WTC11 (cell line): ENCODE measurements at regions of chr12 and their contacts with region 1.

Region 1: DNA sequence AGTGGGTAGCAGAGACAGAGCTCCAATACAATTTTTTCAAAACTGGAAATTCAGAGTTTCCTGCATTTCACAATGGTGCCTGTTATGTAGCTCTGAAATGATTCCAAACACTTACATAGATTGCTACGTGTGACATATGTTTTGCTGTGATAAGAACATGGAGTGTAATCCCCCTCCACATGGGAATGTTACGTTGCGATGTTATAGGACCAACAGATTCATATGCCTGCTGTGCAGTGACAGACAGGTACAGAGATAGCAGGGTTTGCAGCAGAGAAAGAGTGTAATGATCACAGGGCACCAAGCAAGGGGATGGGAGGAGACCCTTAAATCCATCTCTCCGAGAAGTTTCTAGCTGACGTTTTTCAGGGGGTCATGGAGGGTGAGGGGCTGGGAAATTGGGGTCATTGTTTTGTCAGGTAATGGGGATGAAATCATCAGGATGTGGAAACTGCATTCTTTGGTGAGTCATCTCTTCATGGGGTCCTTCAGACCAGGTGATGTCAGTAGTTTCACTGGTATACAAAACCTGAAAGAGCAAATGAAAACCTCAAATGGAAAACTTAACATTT is 76.6 kb upstream of the OSBPL8 start:
- DNase-seq: no peak
- ATAC-seq: peak; percentile 62
- H3K4me3 Mint-ChIP-seq: no peak overlapping the region
- H3K27ac Mint-ChIP-seq: no peak overlapping the region
- H3K4me1 Mint-ChIP-seq: peaks cover 38% of the 10 kb centered on the region
- H3K27me3 Mint-ChIP-seq: no peaks in the 10 kb centered on the region
- CTCF ChIP-seq: no peak

Region 2: GRCh38 chr12:76586764-76587395 is 49.3 kb before region 1 on chr12:
- CTCF ChIA-PET with region 1: no interaction called
- POLR2A ChIA-PET with region 1: no interaction called
- DNase-seq: no peak
- ATAC-seq: no peak
- H3K4me3 Mint-ChIP-seq: no peak overlapping the region
- H3K27ac Mint-ChIP-seq: no peak overlapping the region
- H3K4me1 Mint-ChIP-seq: no peaks in the 10 kb centered on the region
- H3K27me3 Mint-ChIP-seq: no peaks in the 10 kb centered on the region
- CTCF ChIP-seq: peak; percentile 36; the same call in 1 of the 2 replicates

Region 3: GRCh38 chr12:76621582-76622024 is 14.6 kb before region 1 on chr12:
- CTCF ChIA-PET with region 1: interaction called, 13 read pairs
- POLR2A ChIA-PET with region 1: no interaction called
- DNase-seq: peak; percentile 61
- ATAC-seq: peak; percentile 81
- H3K4me3 Mint-ChIP-seq: no peak overlapping the region
- H3K27ac Mint-ChIP-seq: no peak overlapping the region; the same call in 1 of the 2 replicates
- H3K4me1 Mint-ChIP-seq: peaks cover 8% of the 10 kb centered on the region; the same call in 1 of the 2 replicates
- H3K27me3 Mint-ChIP-seq: no peaks in the 10 kb centered on the region
- CTCF ChIP-seq: peak; percentile 71

Region 4: GRCh38 chr12:76790564-76791552 is 154.7 kb after region 1 on chr12:
- CTCF ChIA-PET with region 1: interaction called, 14 read pairs
- POLR2A ChIA-PET with region 1: interaction called, 5 read pairs
- DNase-seq: no peak
- ATAC-seq: no peak
- H3K4me3 Mint-ChIP-seq: no peak overlapping the region
- H3K27ac Mint-ChIP-seq: no peak overlapping the region
- H3K4me1 Mint-ChIP-seq: peaks cover 14% of the 10 kb centered on the region
- H3K27me3 Mint-ChIP-seq: no peaks in the 10 kb centered on the region
- CTCF ChIP-seq: peak; percentile 48

Region 5: GRCh38 chr12:76820888-76821482 is 184.8 kb after region 1 on chr12:
- CTCF ChIA-PET with region 1: interaction called, 16 read pairs
- POLR2A ChIA-PET with region 1: no interaction called
- DNase-seq: peak; percentile 49
- ATAC-seq: peak; percentile 62
- H3K4me3 Mint-ChIP-seq: no peak overlapping the region
- H3K27ac Mint-ChIP-seq: no peak overlapping the region
- H3K4me1 Mint-ChIP-seq: no peaks in the 10 kb centered on the region
- H3K27me3 Mint-ChIP-seq: no peaks in the 10 kb centered on the region
- CTCF ChIP-seq: no peak